GM10248 (cell line): ENCODE measurements at regions of chr7 and their contacts with region 1.

Region 1: DNA sequence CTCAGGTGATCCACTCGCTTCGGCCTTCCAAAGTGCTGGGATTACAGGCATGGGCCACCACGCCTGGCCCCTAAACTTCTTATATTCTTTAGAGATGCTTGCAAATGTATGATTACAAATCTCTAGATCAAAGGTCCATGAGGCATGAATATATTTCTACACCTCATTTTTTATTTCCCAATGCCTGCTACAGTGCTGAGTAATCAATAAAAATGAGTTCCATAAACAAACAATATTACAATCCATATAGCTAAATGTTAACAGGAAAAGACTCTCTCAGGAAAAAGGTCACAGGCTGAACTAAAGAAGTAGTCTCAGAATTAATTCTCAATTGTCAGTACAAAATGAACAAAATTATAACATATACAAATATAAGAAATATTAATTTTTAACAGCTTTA is 90.8 kb downstream of the LMBR1 start:
- DNase-seq: no peak
- CTCF ChIP-seq: no peak

Region 2: GRCh38 chr7:156768683-156769466 is 33.3 kb before region 1 on chr7:
- CTCF ChIA-PET with region 1: no interaction called
- POLR2A ChIA-PET with region 1: no interaction called
- DNase-seq: no peak
- CTCF ChIP-seq: no peak

Region 3: DNA sequence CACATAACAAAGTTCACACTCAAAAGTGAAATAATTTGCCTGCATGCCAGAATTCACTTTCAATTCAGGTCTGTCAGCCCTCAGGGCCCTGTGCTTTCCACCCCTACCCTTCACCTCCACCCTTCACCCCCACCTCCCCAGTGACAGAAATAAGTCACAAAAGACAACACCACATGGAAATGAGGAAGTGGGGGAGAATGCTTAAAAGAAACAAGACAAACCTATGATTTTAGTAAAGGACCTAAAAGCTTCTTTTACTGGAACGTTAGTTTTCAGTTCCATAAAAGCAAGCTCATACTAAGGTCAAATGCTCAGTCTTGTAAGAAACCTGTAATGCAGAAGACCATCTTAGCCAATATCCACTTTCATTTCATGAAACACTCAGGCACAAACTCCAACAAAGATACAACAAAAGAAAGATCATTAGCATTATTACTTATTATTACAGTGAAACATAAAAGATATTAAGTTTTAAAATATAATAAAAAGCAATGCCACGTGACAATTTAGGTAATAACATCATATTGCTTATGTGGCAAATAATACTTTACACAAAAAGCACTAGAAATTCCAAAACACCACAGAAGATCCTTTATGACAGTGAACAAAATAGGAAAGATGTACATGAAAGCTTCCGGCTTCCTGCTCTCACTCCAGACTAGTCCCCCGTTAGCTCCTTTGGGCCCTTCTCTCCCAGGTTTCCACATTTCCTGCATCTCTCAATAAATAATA is 21.3 kb before region 1 on chr7:
- CTCF ChIA-PET with region 1: interaction called, 15 read pairs
- POLR2A ChIA-PET with region 1: no interaction called
- DNase-seq: peak; percentile 67
- CTCF ChIP-seq: no peak

Region 4: GRCh38 chr7:156827587-156828203 is 25.5 kb after region 1 on chr7:
- CTCF ChIA-PET with region 1: no interaction called
- POLR2A ChIA-PET with region 1: no interaction called
- DNase-seq: no peak
- CTCF ChIP-seq: peak; percentile 25

Region 5: DNA sequence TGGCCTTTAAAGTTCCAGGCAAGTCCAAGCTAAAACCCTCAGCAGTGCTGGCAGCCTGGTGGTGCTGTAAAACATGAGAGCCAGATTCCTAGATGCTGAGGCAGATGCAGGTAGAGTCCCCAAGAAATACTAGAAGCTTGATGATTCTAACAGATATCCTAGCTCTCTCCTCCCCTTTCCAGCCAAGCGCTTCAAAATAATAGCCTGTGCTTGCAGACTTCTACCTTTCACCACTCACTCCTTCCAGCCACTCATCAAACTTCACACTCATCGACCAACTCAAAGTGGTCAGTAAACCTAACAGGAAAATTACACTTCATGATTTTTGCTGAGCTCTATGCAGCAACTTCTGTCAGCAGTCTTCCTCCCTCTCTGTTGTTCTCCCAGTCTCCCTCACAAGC is 40.5 kb after region 1 on chr7:
- CTCF ChIA-PET with region 1: no interaction called
- POLR2A ChIA-PET with region 1: no interaction called
- DNase-seq: no peak
- CTCF ChIP-seq: no peak